BJ (cell line): ENCODE measurements at regions of chr3 and their contacts with region 1.

Region 1: GRCh38 chr3:36714343-36715086 is 49.8 kb downstream of the DCLK3 start:
- DNase-seq: peak; percentile 47
- H3K4me3 ChIP-seq: no peak overlapping the region
- H3K27me3 ChIP-seq: no peaks in the 10 kb centered on the region; the same call in 1 of the 2 replicates
- CTCF ChIP-seq: peak; percentile 19

Region 2: GRCh38 chr3:36729204-36730056 is 14.9 kb after region 1 on chr3:
- CTCF ChIA-PET with region 1: interaction called, 13 read pairs
- POLR2A ChIA-PET with region 1: no interaction called
- DNase-seq: no peak
- H3K4me3 ChIP-seq: no peak overlapping the region
- H3K27me3 ChIP-seq: peaks cover 6% of the 10 kb centered on the region; the same call in 1 of the 2 replicates
- CTCF ChIP-seq: peak; percentile 68